ENCODE measurements at regions of chr1 and their contacts with region 1.

Region 1: GRCh38 chr1:147389532-147390524 is 147.3 kb downstream of the CHD1L start:
- DNase-seq: no peak

Region 2: GRCh38 chr1:147080006-147080661 is 309.7 kb before region 1 on chr1:
- intact Hi-C with region 1: no loop called
- DNase-seq: no peak

Region 3: DNA sequence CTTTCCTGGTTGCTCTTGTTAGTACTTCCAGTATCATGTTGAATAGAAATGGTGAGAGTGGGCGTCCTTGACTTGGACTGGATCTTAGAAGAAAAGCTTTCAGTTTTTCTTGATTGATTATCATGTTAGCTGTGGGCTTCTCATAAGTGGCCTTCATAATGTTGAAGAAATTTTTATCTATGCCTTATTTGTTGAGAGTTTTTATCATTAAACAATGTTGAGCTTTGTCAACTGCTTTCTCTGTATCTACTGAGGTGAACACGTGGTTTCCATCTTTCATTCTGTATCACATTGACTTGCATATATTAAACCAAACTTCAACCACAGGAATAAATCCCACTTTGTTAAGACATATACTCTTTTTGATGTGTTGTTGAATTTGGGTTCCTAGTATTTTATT is 246.9 kb before region 1 on chr1:
- intact Hi-C with region 1: no loop called
- DNase-seq: no peak

Region 4: DNA sequence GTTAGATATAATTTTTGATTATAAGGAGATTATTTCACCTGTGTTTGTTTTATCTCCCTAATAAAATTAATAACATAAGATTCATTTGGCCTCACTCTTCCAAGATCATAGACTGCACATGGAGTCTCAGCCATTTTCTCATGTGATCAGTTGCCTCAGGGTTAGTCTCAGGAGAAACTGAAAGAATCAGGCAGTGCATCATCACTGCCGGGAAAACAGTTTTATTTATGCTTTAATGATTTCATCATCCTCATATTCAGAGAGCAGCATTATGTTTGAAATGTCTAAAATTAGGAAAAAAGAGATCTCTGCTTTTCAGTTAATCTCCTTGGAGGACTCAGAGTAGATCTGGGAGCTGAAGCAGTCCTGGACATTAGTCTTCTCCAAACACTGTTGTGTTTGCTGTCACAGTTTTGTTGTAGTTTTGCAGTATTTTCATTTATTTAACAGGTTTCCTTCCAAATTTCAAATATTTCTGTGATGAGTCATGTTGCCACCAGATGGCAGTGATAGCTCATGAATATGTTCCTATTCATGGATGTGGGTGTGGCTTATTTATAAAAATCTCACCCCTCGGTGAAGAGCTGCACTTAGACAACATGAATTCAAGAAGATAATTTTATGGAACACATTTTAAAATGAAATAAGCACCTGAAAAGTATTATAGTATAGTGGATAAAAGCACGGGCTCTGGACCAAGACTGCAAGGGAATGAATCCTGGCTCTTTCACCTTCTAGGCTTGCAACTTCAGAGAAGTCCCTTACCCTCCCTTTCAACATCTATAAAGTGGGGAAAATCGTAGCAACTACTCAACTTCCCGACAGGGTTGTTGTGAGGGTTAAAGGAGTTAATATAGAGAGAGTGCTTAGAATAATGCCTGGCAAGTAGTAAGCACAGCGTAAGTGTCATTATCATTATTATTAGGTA is 116.2 kb before region 1 on chr1:
- intact Hi-C with region 1: loop called (anchors 2 kb)
- DNase-seq: no peak

Region 5: GRCh38 chr1:147337040-147337630 is 52.7 kb before region 1 on chr1:
- intact Hi-C with region 1: no loop called
- DNase-seq: no peak